Right ventricle myocardium superior (tissue), 1 donor: ENCODE measurements at regions of chr15 and their contacts with region 1.

Region 1: GRCh38 chr15:41827880-41828806 is at the start of gene JMJD7:
- DNase-seq: peak; percentile 97
- ATAC-seq: peak; percentile 98
- total RNA-seq, gene JMJD7: 14.3 TPM

Region 2: GRCh38 chr15:41340188-41340695 is 487.9 kb before region 1 on chr15:
- intact Hi-C with region 1: no loop called
- DNase-seq: no peak
- ATAC-seq: no peak

Region 3: DNA sequence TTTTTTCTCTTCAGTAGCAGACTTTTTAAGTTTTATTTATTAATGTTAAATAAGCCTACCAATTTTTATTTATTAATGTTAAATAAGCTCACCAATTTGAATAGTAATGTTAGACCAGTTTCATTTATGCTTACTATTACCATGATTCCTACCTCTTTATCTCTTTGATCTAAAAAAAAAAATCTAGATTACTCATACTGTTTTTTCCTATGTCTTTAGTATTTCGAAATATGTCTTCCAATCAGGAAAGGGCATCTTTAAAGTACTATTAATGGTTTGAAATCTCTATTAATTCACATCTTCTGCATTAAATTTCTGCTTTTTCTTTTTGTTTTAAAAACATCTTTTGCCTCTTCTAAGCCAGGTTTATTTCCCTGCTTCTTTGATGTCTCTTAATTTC is 81.3 kb before region 1 on chr15:
- intact Hi-C with region 1: no loop called
- DNase-seq: no peak
- ATAC-seq: no peak

Region 4: GRCh38 chr15:41904541-41905005 is 76.4 kb after region 1 on chr15:
- intact Hi-C with region 1: loop called (anchors 2 kb)
- DNase-seq: peak; percentile 66
- ATAC-seq: peak; percentile 74